ENCODE measurements at regions of chr22 and their contacts with region 1.

Region 1: DNA sequence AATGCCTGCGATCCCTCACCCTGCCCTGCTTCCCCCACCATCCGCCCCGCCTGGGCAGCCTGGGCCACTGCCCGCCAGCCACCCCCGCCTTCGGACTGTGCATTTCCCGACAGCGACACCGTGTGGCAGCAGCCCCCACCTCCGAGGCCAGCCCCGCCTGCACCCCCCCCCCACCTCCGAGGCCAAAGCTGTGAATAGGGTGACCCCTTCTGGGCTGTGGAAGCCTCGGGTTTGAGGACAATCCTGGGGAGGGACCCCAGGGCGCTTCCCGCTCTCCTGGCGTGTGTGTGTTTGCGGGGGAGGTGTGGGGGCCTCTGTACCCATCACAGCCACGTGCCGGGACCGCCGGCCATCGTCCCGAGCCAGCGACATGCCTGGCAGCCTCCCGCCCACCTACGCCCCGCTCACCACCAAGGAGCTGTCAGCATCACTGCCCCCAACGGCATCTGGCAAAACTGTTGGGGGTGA is 33.8 kb upstream of the PPARA start:
- DNase-seq: peak; percentile 84 to 94 (median 94)
- ATAC-seq: peak; percentile 89
- H3K4me3 ChIP-seq: no peak overlapping the region
- H3K27ac ChIP-seq: no peak overlapping the region
- H3K4me1 ChIP-seq: peaks cover 0 to 61% of the 10 kb centered on the region in 2 experiments; a peak in 3 of 5 replicates
- H3K27me3 ChIP-seq: no peaks in the 10 kb centered on the region
- CTCF ChIP-seq: peak; percentile 60 to 99 (median 89); a peak in 5 of 6 replicates
- EP300 ChIP-seq: no peak
- POLR2A ChIP-seq: no peak
- RAD21 ChIP-seq: peak; percentile 80 to 82

Region 2: DNA sequence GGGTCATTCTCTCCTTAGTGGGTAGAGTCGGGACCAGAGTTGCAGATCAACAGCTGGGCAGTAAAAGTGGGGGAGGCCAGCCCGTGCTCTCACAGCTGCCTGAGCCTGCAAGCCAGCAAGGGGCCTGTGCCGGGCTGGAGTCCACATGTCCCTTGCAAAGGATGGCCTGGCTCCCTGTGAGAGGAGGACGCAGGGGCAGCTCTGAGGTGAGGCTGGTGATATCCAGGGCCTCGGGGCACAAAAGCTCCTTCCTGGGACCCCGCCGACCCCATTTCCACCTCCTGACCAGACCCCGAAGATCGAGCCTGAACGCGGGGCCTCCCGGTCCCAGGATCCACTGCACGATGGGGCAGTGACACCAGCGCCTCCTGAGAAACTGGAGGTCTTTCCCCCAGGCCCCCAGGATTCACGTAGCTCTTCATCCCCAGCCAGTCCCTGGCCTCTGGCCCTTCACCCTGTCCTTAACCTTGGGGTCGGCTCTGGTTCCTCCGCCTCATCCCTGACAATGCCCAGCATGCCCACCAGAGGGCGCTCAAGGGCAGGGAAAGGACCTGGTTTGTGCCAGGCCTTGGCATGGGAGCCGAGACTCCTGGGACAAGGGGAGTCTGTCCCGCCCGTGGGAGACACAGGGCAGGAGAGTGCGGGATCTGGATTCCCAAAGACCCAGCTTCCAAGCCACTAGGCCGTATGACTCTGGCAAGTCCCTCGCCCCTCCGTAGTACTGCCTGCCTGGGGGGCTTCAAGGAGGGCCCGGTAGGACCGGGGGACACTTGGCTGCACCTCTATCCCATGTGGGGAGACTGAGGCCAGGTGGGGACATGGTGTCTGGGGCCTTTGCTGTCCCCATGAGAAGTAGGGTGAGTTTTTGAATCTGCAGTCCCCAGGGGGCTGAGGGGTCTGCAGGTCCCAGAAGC is 121.8 kb before region 1 on chr22:
- CTCF ChIA-PET with region 1: interaction called, 111 read pairs
- POLR2A ChIA-PET with region 1: interaction called, 6 read pairs
- in situ Hi-C with region 1: no loop called
- intact Hi-C with region 1: loop called (anchors 2 kb)
- DNase-seq: peak; percentile 57 to 72 (median 66)
- ATAC-seq: peak; percentile 83
- H3K4me3 ChIP-seq: no peak overlapping the region
- H3K27ac ChIP-seq: no peak overlapping the region
- H3K4me1 ChIP-seq: peaks cover 0 to 31% of the 10 kb centered on the region in 2 experiments; a peak in 2 of 5 replicates
- H3K27me3 ChIP-seq: peaks cover 0 to 34% of the 10 kb centered on the region in 2 experiments; a peak in 2 of 5 replicates
- CTCF ChIP-seq: peak; percentile 79 to 89 (median 86)
- EP300 ChIP-seq: no peak
- POLR2A ChIP-seq: no peak
- RAD21 ChIP-seq: peak; percentile 60 to 91

Region 3: GRCh38 chr22:46006379-46007002 is 110.0 kb before region 1 on chr22:
- CTCF ChIA-PET with region 1: interaction called, 57 read pairs
- POLR2A ChIA-PET with region 1: interaction called, 4 read pairs
- in situ Hi-C with region 1: loop called (anchors 5 kb)
- intact Hi-C with region 1: loop called (anchors 1 kb)
- DNase-seq: peak; percentile 83 to 85 (median 85)
- ATAC-seq: peak; percentile 96
- H3K4me3 ChIP-seq: no peak overlapping the region
- H3K27ac ChIP-seq: no peak overlapping the region
- H3K4me1 ChIP-seq: peaks cover 0 to 49% of the 10 kb centered on the region in 2 experiments; a peak in 2 of 5 replicates
- H3K27me3 ChIP-seq: no peaks in the 10 kb centered on the region
- CTCF ChIP-seq: peak; percentile 82 to 90 (median 83)
- EP300 ChIP-seq: no peak
- POLR2A ChIP-seq: no peak
- RAD21 ChIP-seq: peak; percentile 65 to 85

Region 4: GRCh38 chr22:46213052-46213451 is 96.5 kb after region 1 on chr22:
- CTCF ChIA-PET with region 1: no interaction called
- POLR2A ChIA-PET with region 1: no interaction called
- in situ Hi-C with region 1: no loop called
- intact Hi-C with region 1: no loop called
- DNase-seq: no peak
- ATAC-seq: no peak
- H3K4me3 ChIP-seq: no peak overlapping the region
- H3K27ac ChIP-seq: no peak overlapping the region
- H3K4me1 ChIP-seq: no peaks in the 10 kb centered on the region
- H3K27me3 ChIP-seq: no peaks in the 10 kb centered on the region
- CTCF ChIP-seq: no peak
- EP300 ChIP-seq: no peak
- POLR2A ChIP-seq: no peak
- RAD21 ChIP-seq: no peak

Region 5: DNA sequence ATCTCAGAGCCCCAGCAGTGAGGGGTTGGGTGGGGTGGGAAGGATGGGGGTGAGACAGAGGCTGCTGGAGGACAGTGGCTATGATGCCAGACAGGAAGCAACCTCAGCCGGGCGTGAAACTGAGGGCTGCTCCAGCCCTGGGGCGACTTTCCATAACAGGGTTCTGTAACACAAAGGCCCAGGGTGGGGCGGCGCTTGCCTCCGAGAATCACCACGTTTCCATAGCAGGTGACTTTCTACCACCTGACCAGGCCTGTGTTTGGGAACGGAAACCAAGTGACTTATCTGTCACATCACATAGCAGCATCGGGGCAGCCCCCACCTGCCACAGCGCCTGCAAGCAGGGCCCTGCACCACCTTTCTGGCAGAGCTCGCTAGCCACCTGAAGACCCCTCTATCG is 304.7 kb after region 1 on chr22:
- CTCF ChIA-PET with region 1: no interaction called
- POLR2A ChIA-PET with region 1: no interaction called
- in situ Hi-C with region 1: no loop called
- intact Hi-C with region 1: no loop called
- DNase-seq: no peak
- ATAC-seq: no peak
- H3K4me3 ChIP-seq: no peak overlapping the region
- H3K27ac ChIP-seq: no peak overlapping the region
- H3K4me1 ChIP-seq: no peaks in the 10 kb centered on the region
- H3K27me3 ChIP-seq: peaks cover 4 to 44% of the 10 kb centered on the region in 2 experiments; a peak in 3 of 5 replicates
- CTCF ChIP-seq: no peak
- EP300 ChIP-seq: no peak
- POLR2A ChIP-seq: no peak
- RAD21 ChIP-seq: no peak

Measured in K562 (cell line).